ENCODE measurements at regions of chr1 and their contacts with region 1.

Region 1: DNA sequence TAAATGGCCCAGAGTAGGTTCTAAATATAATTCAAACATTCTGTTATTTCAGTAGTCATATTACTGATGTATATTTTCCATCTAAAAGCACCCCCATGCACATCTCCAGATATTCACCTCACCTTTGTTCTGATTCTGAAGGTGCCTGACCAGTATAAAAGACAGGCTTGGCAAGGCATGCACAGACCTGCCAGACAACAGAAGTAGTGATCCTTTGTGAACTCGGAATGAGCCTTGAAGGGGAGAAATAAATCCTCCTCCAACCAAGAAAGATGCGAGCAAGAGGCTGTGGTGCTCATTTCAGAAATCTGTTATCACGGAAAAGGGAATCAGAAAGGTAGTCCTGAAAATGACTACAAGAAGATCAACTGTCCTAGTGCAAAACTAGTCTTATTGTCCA is 287.3 kb downstream of the VAV3 start:
- DNase-seq: no peak
- H3K4me3 ChIP-seq: no peak overlapping the region
- H3K27ac ChIP-seq: no peak overlapping the region
- H3K4me1 ChIP-seq: peaks cover 8% of the 10 kb centered on the region
- H3K27me3 ChIP-seq: no peaks in the 10 kb centered on the region

Region 2: DNA sequence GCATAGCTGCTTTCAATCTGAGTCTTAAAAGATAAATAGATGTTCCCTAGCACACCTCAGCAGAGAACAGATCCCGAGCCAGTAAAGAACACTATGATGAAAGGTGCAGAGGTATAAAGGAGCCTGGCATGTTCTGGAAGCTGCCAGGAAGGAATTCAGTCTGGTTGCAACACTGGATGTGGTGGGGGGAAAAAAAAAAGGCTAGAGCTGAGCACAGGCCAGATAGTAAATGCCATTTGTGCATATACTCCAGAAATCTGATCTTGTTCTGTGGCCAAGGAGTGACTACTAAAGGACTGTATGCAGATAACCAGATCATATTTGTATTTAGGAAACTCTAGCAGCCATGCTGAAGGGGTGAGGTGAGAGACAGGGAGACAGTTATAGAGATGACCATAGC is 47.0 kb after region 1 on chr1:
- in situ Hi-C with region 1: loop called (anchors 5 kb)
- DNase-seq: peak; percentile 53
- H3K4me3 ChIP-seq: no peak overlapping the region
- H3K27ac ChIP-seq: no peak overlapping the region
- H3K4me1 ChIP-seq: peaks cover 11% of the 10 kb centered on the region; the same call in 1 of the 2 replicates
- H3K27me3 ChIP-seq: no peaks in the 10 kb centered on the region

Region 3: GRCh38 chr1:108067884-108068538 is 390.3 kb after region 1 on chr1:
- in situ Hi-C with region 1: no loop called
- DNase-seq: no peak
- H3K4me3 ChIP-seq: no peak overlapping the region
- H3K27ac ChIP-seq: no peak overlapping the region
- H3K4me1 ChIP-seq: no peaks in the 10 kb centered on the region
- H3K27me3 ChIP-seq: peaks cover 11% of the 10 kb centered on the region; the same call in 1 of the 2 replicates